A673 (cell line): ENCODE measurements at regions of chr15 and their contacts with region 1.

Region 1: GRCh38 chr15:99273801-99274200 is 22.5 kb downstream of the LRRC28 start:
- DNase-seq: no peak
- H3K4me3 ChIP-seq: no peak overlapping the region
- H3K27ac ChIP-seq: no peak overlapping the region
- H3K4me1 ChIP-seq: no peaks in the 10 kb centered on the region
- H3K27me3 ChIP-seq: no peaks in the 10 kb centered on the region
- CTCF ChIP-seq: no peak

Region 2: DNA sequence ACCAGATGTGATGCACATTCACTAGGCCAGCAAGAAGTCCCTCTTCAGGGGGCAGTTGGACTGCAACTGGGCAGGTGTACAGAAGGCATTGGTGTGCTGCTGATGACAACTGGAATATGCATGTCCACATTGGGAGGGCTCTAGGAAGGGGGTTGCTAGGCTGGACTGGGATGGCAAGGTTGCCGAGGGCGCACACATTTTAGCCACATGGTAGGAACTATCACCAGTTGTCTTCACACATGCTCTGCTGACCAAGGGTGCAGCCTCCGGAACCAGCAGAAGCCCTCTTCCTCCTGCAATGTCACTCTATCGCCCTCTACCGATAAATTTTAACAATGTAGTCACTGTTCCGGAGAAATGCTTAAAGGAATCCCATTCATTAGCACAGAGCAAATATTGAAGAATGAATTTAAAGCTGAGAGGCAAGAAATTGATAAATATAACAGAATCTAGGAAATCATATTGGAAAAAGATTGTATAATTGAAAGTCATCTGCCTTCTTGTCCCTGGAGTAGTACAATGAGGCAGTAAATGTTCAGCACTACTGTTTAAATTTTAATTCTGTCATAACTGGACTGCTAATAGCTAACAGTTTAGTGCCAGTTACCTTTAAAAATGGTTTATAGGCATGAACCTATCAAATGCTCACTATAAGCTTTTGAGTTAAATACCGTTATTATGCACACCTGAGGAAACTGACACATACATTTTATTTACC is 482.1 kb after region 1 on chr15:
- CTCF ChIA-PET with region 1: no interaction called
- POLR2A ChIA-PET with region 1: no interaction called
- intact Hi-C with region 1: loop called (anchors 5 kb)
- DNase-seq: peak; percentile 76
- H3K4me3 ChIP-seq: no peak overlapping the region
- H3K27ac ChIP-seq: no peak overlapping the region
- H3K4me1 ChIP-seq: no peaks in the 10 kb centered on the region
- H3K27me3 ChIP-seq: no peaks in the 10 kb centered on the region
- CTCF ChIP-seq: peak; percentile 80

Region 3: DNA sequence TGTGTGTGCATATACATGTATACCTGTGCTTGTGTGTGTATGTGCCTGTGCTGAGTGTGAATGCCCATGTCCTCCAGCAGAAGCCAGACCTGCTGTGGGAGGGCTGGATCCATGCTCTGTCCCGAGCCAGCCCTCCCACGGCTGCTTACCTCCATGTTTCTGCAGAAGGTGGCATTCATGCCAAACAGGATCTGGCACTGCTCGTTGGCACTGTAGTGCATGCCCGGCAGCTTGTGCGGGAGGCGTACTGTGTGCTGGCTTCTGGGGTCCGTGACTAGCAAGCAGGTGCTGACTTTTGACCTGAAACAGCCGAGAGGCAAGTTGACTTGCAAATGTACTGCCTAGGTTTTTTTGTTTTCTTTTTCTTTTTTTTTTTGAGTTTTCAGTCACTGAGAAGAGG is 878.7 kb after region 1 on chr15:
- CTCF ChIA-PET with region 1: no interaction called
- POLR2A ChIA-PET with region 1: no interaction called
- intact Hi-C with region 1: no loop called
- DNase-seq: no peak
- H3K4me3 ChIP-seq: no peak overlapping the region
- H3K27ac ChIP-seq: no peak overlapping the region
- H3K4me1 ChIP-seq: no peaks in the 10 kb centered on the region
- H3K27me3 ChIP-seq: no peaks in the 10 kb centered on the region
- CTCF ChIP-seq: no peak